ENCODE measurements at regions of chr10 and their contacts with region 1.

Region 1: DNA sequence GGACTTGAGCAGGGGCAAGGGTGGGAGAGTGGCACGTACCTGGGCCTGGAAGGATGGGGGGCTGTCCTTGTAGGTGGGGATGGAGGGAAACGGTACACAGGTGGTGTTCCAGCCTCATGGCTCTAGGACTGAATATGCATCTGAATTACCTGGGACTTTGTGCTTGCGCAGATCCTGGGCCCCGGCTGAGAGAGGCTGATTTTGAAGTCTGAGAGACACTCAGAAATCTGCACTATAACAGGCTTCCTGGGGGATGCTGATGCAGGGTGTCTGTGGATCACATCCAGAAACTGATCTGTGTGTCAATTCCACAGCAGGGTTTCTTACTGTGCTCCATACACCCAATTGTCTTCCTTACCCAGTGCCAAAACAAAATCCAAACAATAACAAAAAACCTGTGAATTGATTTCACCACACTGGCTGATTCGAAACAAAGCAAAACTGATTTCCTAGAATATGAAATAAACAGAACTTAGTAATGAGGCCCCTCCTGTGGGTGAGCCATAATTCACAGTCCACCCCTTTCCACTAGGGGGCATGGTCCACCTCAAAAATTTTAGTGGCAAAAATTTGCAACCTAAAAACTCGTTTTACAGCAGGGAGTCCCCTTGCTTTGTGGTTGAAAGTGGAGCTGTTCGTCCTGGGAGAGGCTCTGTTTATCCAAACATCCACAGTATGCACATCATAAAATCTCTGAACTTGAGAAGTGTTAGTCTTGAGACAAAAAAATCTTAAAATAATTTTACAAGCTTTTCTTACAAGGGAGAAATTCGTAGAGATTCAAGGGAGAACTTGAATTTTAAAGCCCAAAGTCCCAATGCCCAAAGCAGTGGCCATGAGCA is 32.0 kb upstream of the PLEKHA1 start:
- DNase-seq: peak; percentile 44 to 71
- ATAC-seq: peak; percentile 81 to 83
- H3K4me3 ChIP-seq: no peak overlapping the region
- H3K27ac ChIP-seq: peak overlapping the region; percentile 32 to 42; a peak in 3 of 6 replicates
- H3K4me1 ChIP-seq: peaks cover 16% of the 10 kb centered on the region
- CTCF ChIP-seq: peak; percentile 72
- EP300 ChIP-seq: no peak
- POLR2A ChIP-seq: no peak
- RAD21 ChIP-seq: peak; percentile 75 to 78

Region 2: GRCh38 chr10:122323941-122324675 is 18.4 kb before region 1 on chr10:
- CTCF ChIA-PET with region 1: interaction called, 18 read pairs
- POLR2A ChIA-PET with region 1: no interaction called
- DNase-seq: peak in 1 of 2 experiments; percentile 54
- ATAC-seq: peak; percentile 82 to 84; a peak in 5 of 6 replicates
- H3K4me3 ChIP-seq: no peak overlapping the region
- H3K27ac ChIP-seq: peak overlapping the region; percentile 52 to 54; a peak in 5 of 6 replicates
- H3K4me1 ChIP-seq: peaks cover 15% of the 10 kb centered on the region
- CTCF ChIP-seq: no peak
- EP300 ChIP-seq: no peak
- POLR2A ChIP-seq: no peak
- RAD21 ChIP-seq: no peak

Region 3: GRCh38 chr10:122331615-122332446 is 10.7 kb before region 1 on chr10:
- CTCF ChIA-PET with region 1: interaction called, 13 read pairs
- POLR2A ChIA-PET with region 1: no interaction called
- DNase-seq: peak; percentile 52 to 68
- ATAC-seq: peak; percentile 88 to 91
- H3K4me3 ChIP-seq: no peak overlapping the region
- H3K27ac ChIP-seq: peak overlapping the region; percentile 69 to 85
- H3K4me1 ChIP-seq: peaks cover 26% of the 10 kb centered on the region
- CTCF ChIP-seq: no peak
- EP300 ChIP-seq: no peak
- POLR2A ChIP-seq: peak; percentile 31; the same call in 1 of the 2 replicates
- RAD21 ChIP-seq: no peak

Region 4: GRCh38 chr10:122352817-122353525 is 10.5 kb after region 1 on chr10:
- CTCF ChIA-PET with region 1: interaction called, 38 read pairs
- POLR2A ChIA-PET with region 1: no interaction called
- DNase-seq: no peak
- ATAC-seq: no peak; a peak in 2 of 6 replicates
- H3K4me3 ChIP-seq: no peak overlapping the region
- H3K27ac ChIP-seq: no peak overlapping the region
- H3K4me1 ChIP-seq: no peaks in the 10 kb centered on the region
- CTCF ChIP-seq: no peak
- EP300 ChIP-seq: no peak
- POLR2A ChIP-seq: no peak
- RAD21 ChIP-seq: no peak

Region 5: GRCh38 chr10:122374237-122374869 is 31.8 kb after region 1 on chr10 and contains the start of gene PLEKHA1:
- CTCF ChIA-PET with region 1: interaction called, 13 read pairs
- POLR2A ChIA-PET with region 1: no interaction called
- DNase-seq: peak; percentile 90 to 94
- ATAC-seq: peak; percentile 95 to 96
- H3K4me3 ChIP-seq: peak within 1 kb of the TSS; percentile 74
- H3K27ac ChIP-seq: peak within 1 kb of the TSS; percentile 89 to 97
- H3K4me1 ChIP-seq: peaks cover 34% of the 10 kb centered on the region
- CTCF ChIP-seq: no peak
- EP300 ChIP-seq: no peak
- POLR2A ChIP-seq: peak; percentile 82
- RAD21 ChIP-seq: no peak
- polyA plus RNA-seq, gene PLEKHA1: 52.0 and 62.4 TPM in 2 replicates

Region 6: GRCh38 chr10:122413325-122413724 is 70.8 kb after region 1 on chr10:
- CTCF ChIA-PET with region 1: no interaction called
- POLR2A ChIA-PET with region 1: no interaction called
- DNase-seq: no peak
- ATAC-seq: no peak
- H3K4me3 ChIP-seq: no peak overlapping the region
- H3K27ac ChIP-seq: no peak overlapping the region
- H3K4me1 ChIP-seq: no peaks in the 10 kb centered on the region
- CTCF ChIP-seq: no peak
- EP300 ChIP-seq: no peak
- POLR2A ChIP-seq: no peak
- RAD21 ChIP-seq: no peak